ENCODE measurements at regions of chr1 and their contacts with region 1.

Region 1: GRCh38 chr1:185595835-185596667 is 138.1 kb upstream of the HMCN1 start:
- DNase-seq: peak; percentile 13
- ATAC-seq: peak; percentile 98
- H3K4me3 ChIP-seq: no peak overlapping the region
- H3K27ac ChIP-seq: no peak overlapping the region
- H3K4me1 ChIP-seq: no peaks in the 10 kb centered on the region
- H3K27me3 ChIP-seq: no peaks in the 10 kb centered on the region
- CTCF ChIP-seq: peak; percentile 71 to 86 (median 83)
- EP300 ChIP-seq: no peak
- POLR2A ChIP-seq: no peak
- RAD21 ChIP-seq: peak; percentile 72

Region 2: DNA sequence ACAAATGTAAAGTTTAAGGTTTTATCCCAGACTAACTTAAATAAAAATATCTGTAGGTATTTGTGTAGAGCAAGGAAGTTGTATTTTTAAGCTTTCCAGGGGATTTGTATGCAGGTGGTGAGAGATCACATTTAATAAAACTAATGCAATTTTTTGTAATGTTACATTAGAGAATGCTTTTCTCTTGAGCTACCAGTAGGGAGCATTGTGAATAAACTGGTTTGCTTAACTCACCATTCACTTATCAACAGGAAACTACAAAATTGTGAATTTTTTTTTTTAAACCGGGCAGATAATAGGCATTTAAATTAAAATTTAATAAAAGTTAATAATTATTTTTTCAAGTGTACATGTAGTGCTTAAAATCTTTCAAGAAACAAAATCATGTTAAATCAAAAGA is 357.6 kb before region 1 on chr1:
- CTCF ChIA-PET with region 1: interaction called, 44 read pairs
- POLR2A ChIA-PET with region 1: no interaction called
- RAD21 ChIA-PET with region 1: interaction called, 26 read pairs
- SMC1A ChIA-PET with region 1: interaction called, 33 read pairs
- in situ Hi-C with region 1: no loop called
- intact Hi-C with region 1: no loop called
- DNase-seq: no peak
- ATAC-seq: peak; percentile 50
- H3K4me3 ChIP-seq: no peak overlapping the region
- H3K27ac ChIP-seq: no peak overlapping the region
- H3K4me1 ChIP-seq: no peaks in the 10 kb centered on the region
- H3K27me3 ChIP-seq: no peaks in the 10 kb centered on the region
- CTCF ChIP-seq: peak; percentile 29 to 40 (median 29); a peak in 4 of 6 replicates
- EP300 ChIP-seq: no peak
- POLR2A ChIP-seq: no peak
- RAD21 ChIP-seq: peak; percentile 39

Region 3: GRCh38 chr1:185338719-185339622 is 257.1 kb before region 1 on chr1:
- CTCF ChIA-PET with region 1: interaction called, 14 read pairs
- POLR2A ChIA-PET with region 1: no interaction called
- RAD21 ChIA-PET with region 1: interaction called, 3 read pairs
- SMC1A ChIA-PET with region 1: interaction called, 4 read pairs
- in situ Hi-C with region 1: no loop called
- intact Hi-C with region 1: no loop called
- DNase-seq: peak; percentile 86
- ATAC-seq: peak; percentile 97
- H3K4me3 ChIP-seq: no peak overlapping the region
- H3K27ac ChIP-seq: peak overlapping the region; percentile 59
- H3K4me1 ChIP-seq: peaks cover 21% of the 10 kb centered on the region
- H3K27me3 ChIP-seq: no peaks in the 10 kb centered on the region
- CTCF ChIP-seq: no peak
- EP300 ChIP-seq: peak; percentile 93 to 97
- POLR2A ChIP-seq: no peak
- RAD21 ChIP-seq: no peak

Region 4: DNA sequence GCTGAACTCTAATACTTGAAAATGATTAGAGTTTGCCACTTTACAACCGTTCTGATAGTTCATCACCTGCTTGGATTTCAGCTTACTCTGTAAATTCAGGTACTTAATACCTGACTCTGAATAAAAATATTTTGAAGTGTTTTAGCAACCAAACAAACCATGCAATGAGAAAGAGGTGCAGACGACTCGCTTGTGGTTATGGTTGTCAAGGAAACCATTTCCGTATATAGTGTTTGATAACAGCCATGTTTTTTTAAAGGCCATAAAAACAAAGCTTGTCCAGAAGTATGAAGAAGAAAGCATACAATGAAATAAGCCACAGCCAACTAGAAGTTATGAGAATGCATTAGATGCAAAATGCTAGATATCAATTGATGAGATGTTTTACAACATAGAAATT is 29.1 kb before region 1 on chr1:
- CTCF ChIA-PET with region 1: interaction called, 25 read pairs
- POLR2A ChIA-PET with region 1: no interaction called
- RAD21 ChIA-PET with region 1: interaction called, 6 read pairs
- SMC1A ChIA-PET with region 1: interaction called, 17 read pairs
- in situ Hi-C with region 1: no loop called
- intact Hi-C with region 1: no loop called
- DNase-seq: no peak
- ATAC-seq: peak; percentile 59; the same call in 2 of the 3 replicates
- H3K4me3 ChIP-seq: no peak overlapping the region
- H3K27ac ChIP-seq: no peak overlapping the region
- H3K4me1 ChIP-seq: no peaks in the 10 kb centered on the region
- H3K27me3 ChIP-seq: no peaks in the 10 kb centered on the region
- CTCF ChIP-seq: no peak
- EP300 ChIP-seq: no peak; a peak in 1 of 4 replicates
- POLR2A ChIP-seq: no peak
- RAD21 ChIP-seq: no peak

Region 5: GRCh38 chr1:185581961-185582725 is 13.9 kb before region 1 on chr1:
- CTCF ChIA-PET with region 1: interaction called, 17 read pairs
- POLR2A ChIA-PET with region 1: no interaction called
- RAD21 ChIA-PET with region 1: no interaction called
- SMC1A ChIA-PET with region 1: interaction called, 6 read pairs
- in situ Hi-C with region 1: no loop called
- intact Hi-C with region 1: no loop called
- DNase-seq: no peak
- ATAC-seq: no peak
- H3K4me3 ChIP-seq: no peak overlapping the region
- H3K27ac ChIP-seq: no peak overlapping the region
- H3K4me1 ChIP-seq: no peaks in the 10 kb centered on the region
- H3K27me3 ChIP-seq: no peaks in the 10 kb centered on the region
- CTCF ChIP-seq: no peak
- EP300 ChIP-seq: no peak
- POLR2A ChIP-seq: no peak
- RAD21 ChIP-seq: no peak

Region 6: DNA sequence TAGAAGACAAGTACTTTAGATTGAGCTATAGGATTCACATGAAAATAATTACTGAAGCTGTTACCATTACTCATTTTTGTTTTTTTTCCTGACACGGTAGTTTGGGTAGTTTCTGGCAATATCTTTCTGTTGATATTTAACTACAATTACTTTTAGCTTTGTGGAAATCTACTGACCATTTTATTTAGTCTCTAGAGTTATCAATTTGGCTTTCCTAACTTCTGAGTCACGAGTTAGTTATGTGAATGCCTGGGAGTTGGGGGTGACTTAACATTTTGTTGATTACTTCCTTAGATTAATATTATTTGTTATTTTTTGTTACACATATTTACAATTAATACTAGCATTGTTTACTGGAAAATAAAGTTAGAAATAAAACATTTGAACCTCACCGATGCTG is 298.7 kb after region 1 on chr1:
- CTCF ChIA-PET with region 1: no interaction called
- POLR2A ChIA-PET with region 1: no interaction called
- RAD21 ChIA-PET with region 1: no interaction called
- SMC1A ChIA-PET with region 1: no interaction called
- in situ Hi-C with region 1: no loop called
- intact Hi-C with region 1: no loop called
- DNase-seq: no peak
- ATAC-seq: no peak
- H3K4me3 ChIP-seq: no peak overlapping the region
- H3K27ac ChIP-seq: no peak overlapping the region
- H3K4me1 ChIP-seq: no peaks in the 10 kb centered on the region
- H3K27me3 ChIP-seq: no peaks in the 10 kb centered on the region; a peak in 1 of 4 replicates
- CTCF ChIP-seq: no peak
- EP300 ChIP-seq: no peak
- POLR2A ChIP-seq: no peak
- RAD21 ChIP-seq: no peak

Measured in GM12878 (cell line).